ENCODE measurements at regions of chr19 and their contacts with region 1.

Region 1: DNA sequence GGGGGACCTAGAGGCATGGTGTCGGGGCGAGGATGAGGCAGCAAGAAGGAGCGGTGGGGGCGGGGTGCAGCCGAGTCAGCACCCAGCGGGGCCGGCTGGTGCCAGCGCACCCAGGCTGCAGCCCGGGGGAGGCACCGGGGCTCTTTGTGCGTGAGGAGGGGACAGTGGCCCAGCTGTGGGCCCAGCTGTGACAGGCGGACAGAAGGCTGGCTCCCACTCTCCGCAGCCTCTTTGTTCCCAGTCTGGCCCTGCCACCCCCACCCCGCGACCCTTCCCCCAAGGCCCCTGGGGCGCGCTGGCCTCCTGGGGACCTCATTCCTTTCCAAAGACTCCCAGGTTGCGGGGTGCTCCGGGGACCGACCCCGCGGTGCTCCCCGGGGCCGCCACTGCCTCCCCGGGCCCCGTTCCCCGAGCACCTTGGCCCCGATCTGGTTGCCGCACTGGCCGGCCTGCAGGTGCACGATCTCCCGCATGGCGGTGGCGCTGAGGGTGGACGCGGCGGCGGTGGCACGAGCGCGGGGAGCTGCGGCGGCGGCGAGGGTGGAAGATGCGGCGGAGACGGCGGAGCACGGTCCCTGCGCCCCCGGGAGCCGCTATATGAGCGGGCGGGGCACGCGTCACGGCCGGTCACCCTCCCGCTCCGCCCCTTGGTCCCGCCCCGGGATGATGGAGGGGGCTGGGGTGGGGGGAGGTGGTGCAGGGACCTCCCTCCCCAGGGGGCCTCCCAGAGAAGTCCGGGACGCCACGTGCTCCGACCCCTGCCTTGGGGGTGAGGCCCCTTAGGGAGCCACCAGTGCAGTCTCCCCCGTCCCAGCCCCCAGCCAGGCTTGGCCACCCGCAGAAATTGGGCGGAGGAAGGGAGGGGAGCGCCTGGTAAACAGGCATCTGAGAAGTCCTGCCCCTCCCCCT is at the start of gene TUBB4A:
- DNase-seq: peak in 9 of 14 experiments; percentile 31 to 55 (median 48)
- ATAC-seq: peak; percentile 28
- H3K4me3 ChIP-seq: peak within 1 kb of the TSS; percentile 47
- H3K4me3 Mint-ChIP-seq: peak within 1 kb of the TSS; percentile 93
- H3K27ac ChIP-seq: no peak within 1 kb of the TSS
- H3K27ac Mint-ChIP-seq: no peak within 1 kb of the TSS
- H3K4me1 ChIP-seq: peaks cover 24% of the 10 kb centered on the region
- H3K4me1 Mint-ChIP-seq: peaks cover 15% of the 10 kb centered on the region
- H3K27me3 ChIP-seq: peaks cover 13 to 21% of the 10 kb centered on the region in 2 experiments
- H3K27me3 Mint-ChIP-seq: peaks cover 23% of the 10 kb centered on the region
- CTCF ChIP-seq: peak; percentile 9
- total RNA-seq, gene TUBB4A: 0.53 to 0.88 TPM

Region 2: DNA sequence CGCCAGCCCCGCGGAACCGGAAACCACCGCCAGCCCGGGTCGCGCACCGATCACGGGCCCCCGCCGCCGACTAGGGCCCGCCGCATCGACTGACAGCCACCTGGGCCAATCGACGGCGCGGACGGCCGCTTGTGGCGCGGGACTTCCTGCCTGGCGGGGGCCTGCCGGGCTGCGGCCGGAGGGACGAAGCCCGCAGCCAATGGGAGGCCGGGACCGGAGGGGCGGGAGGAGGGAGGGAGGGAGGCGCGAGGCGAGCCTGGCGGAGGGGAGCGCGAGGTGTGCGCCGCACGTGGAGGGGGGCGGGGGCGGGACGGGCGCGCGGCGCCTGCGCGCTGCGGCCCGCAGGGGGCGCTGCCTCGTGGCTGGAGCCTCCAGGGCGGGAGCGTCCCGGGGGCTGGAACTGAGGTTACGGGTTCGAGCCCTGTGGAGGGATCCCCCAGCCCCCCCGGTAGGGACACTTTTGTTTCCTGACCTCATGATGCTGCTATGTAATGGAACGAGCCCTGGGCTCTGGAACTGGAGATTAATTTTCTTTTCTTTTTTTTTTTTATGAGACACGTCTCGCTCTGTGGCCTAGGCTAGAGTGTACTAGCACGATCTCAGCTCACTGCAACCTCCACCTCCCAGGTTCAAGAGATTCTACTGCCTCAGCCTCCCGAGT is 221.9 kb before region 1 on chr19 and contains the start of gene MLLT1:
- CTCF ChIA-PET with region 1: no interaction called
- POLR2A ChIA-PET with region 1: no interaction called
- intact Hi-C with region 1: loop called in 1 of 2 experiments (anchors 5 kb)
- DNase-seq: peak; percentile 85 to 98 (median 94)
- ATAC-seq: peak; percentile 79
- H3K4me3 ChIP-seq: peak within 1 kb of the TSS; percentile 67
- H3K4me3 Mint-ChIP-seq: peak within 1 kb of the TSS; percentile 94
- H3K27ac ChIP-seq: peak within 1 kb of the TSS; percentile 54 to 75
- H3K27ac Mint-ChIP-seq: peak within 1 kb of the TSS; percentile 86
- H3K4me1 ChIP-seq: peaks cover 42% of the 10 kb centered on the region
- H3K4me1 Mint-ChIP-seq: peaks cover 40% of the 10 kb centered on the region
- H3K27me3 ChIP-seq: no peaks in the 10 kb centered on the region
- H3K27me3 Mint-ChIP-seq: no peaks in the 10 kb centered on the region
- CTCF ChIP-seq: peak; percentile 56
- total RNA-seq, gene MLLT1: 18.3 to 22.1 TPM

Region 3: GRCh38 chr19:6393074-6393983 is 108.7 kb before region 1 on chr19 and contains the start of gene GTF2F1:
- CTCF ChIA-PET with region 1: no interaction called
- POLR2A ChIA-PET with region 1: no interaction called
- intact Hi-C with region 1: loop called in 1 of 2 experiments (anchors 10 kb)
- DNase-seq: peak; percentile 88 to 97 (median 90)
- ATAC-seq: peak; percentile 81
- H3K4me3 ChIP-seq: peak within 1 kb of the TSS; percentile 78
- H3K4me3 Mint-ChIP-seq: peak within 1 kb of the TSS; percentile 97
- H3K27ac ChIP-seq: peak within 1 kb of the TSS; percentile 89 to 98
- H3K27ac Mint-ChIP-seq: peak within 1 kb of the TSS; percentile 99
- H3K4me1 ChIP-seq: peaks cover 29% of the 10 kb centered on the region
- H3K4me1 Mint-ChIP-seq: peaks cover 29% of the 10 kb centered on the region
- H3K27me3 ChIP-seq: no peaks in the 10 kb centered on the region
- H3K27me3 Mint-ChIP-seq: no peaks in the 10 kb centered on the region
- CTCF ChIP-seq: no peak
- total RNA-seq, gene GTF2F1: 56.1 to 61.1 TPM

Region 4: GRCh38 chr19:6460101-6460853 is 41.7 kb before region 1 on chr19:
- CTCF ChIA-PET with region 1: no interaction called
- POLR2A ChIA-PET with region 1: no interaction called
- intact Hi-C with region 1: loop called (anchors 2 to 5 kb)
- DNase-seq: peak; percentile 95 to 97 (median 96)
- ATAC-seq: peak; percentile 80
- H3K4me3 ChIP-seq: peak overlapping the region; percentile 68
- H3K4me3 Mint-ChIP-seq: peak overlapping the region; percentile 91
- H3K27ac ChIP-seq: peak overlapping the region; percentile 44 to 89
- H3K27ac Mint-ChIP-seq: peak overlapping the region; percentile 86
- H3K4me1 ChIP-seq: peaks cover 36% of the 10 kb centered on the region
- H3K4me1 Mint-ChIP-seq: peaks cover 31% of the 10 kb centered on the region
- H3K27me3 ChIP-seq: no peaks in the 10 kb centered on the region
- H3K27me3 Mint-ChIP-seq: no peaks in the 10 kb centered on the region
- CTCF ChIP-seq: peak; percentile 75

Region 5: GRCh38 chr19:6516659-6517291 is 14.8 kb after region 1 on chr19:
- CTCF ChIA-PET with region 1: interaction called, 4 read pairs
- POLR2A ChIA-PET with region 1: no interaction called
- intact Hi-C with region 1: loop called in 1 of 2 experiments (anchors 1 kb)
- DNase-seq: peak; percentile 81 to 95 (median 90)
- ATAC-seq: peak; percentile 91
- H3K4me3 ChIP-seq: peak overlapping the region; percentile 86
- H3K4me3 Mint-ChIP-seq: peak overlapping the region; percentile 94
- H3K27ac ChIP-seq: no peak overlapping the region
- H3K27ac Mint-ChIP-seq: peak overlapping the region; percentile 24
- H3K4me1 ChIP-seq: peaks cover 32% of the 10 kb centered on the region
- H3K4me1 Mint-ChIP-seq: peaks cover 33% of the 10 kb centered on the region
- H3K27me3 ChIP-seq: no peaks in the 10 kb centered on the region
- H3K27me3 Mint-ChIP-seq: no peaks in the 10 kb centered on the region
- CTCF ChIP-seq: peak; percentile 95

Region 6: DNA sequence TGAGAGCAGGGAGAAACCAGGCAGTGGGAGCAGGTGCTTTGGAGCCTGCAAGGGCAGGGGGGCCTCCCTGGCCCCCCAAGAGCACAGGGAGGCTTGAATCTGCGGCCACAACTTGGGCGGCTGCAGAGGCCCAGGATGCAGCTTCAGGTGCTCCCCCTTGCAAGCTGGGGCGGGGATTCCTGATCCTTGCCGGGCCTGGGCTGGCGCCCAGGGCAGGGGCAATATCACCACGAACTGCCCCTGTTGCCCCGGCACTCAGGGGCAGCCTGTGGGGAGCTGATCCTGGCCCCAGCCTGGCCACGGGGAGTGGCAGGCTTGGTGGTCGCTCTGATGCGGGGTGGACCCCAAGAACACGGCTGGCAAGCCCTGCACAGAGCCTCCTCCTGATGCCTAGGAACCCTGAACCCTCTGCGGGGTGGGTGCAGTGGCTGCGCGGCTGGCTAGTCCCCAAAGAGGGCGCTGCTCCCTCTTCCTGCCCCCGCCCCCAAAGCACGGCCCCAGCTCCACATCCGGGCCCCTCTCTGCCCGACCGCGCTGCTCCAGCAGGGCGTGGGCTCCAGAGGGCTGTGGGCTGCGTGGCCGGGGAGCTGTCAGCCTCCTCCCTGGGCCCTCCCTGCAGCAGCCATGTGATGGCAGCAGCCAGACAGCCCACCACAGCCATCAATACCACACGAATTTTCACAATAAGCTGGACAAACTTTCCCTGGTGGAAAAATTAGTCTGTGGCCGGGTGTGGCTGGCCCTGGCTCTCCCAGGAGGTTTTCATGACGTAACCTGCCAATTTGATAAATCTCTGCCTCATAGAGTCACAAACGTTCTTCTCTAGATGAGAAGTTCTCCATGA is 49.8 kb after region 1 on chr19:
- CTCF ChIA-PET with region 1: no interaction called
- POLR2A ChIA-PET with region 1: no interaction called
- intact Hi-C with region 1: no loop called
- DNase-seq: peak; percentile 19 to 83 (median 46)
- ATAC-seq: peak; percentile 99
- H3K4me3 ChIP-seq: peak overlapping the region; percentile 24
- H3K4me3 Mint-ChIP-seq: no peak overlapping the region
- H3K27ac ChIP-seq: no peak overlapping the region
- H3K27ac Mint-ChIP-seq: no peak overlapping the region
- H3K4me1 ChIP-seq: peaks cover 19% of the 10 kb centered on the region
- H3K4me1 Mint-ChIP-seq: peaks cover 6% of the 10 kb centered on the region
- H3K27me3 ChIP-seq: no peaks in the 10 kb centered on the region
- H3K27me3 Mint-ChIP-seq: no peaks in the 10 kb centered on the region
- CTCF ChIP-seq: peak; percentile 29

Measured in CD4-positive, alpha-beta T cell (primary cell).